Activated CD4-positive, alpha-beta memory T cell treated with anti-CD3 and anti-CD28 coated beads, Interleukin-2, amount 10 ng/mL, durations not matched to agents 7 days and 5 days (primary cell): ENCODE measurements at regions of chr12 and their contacts with region 1.

Region 1: DNA sequence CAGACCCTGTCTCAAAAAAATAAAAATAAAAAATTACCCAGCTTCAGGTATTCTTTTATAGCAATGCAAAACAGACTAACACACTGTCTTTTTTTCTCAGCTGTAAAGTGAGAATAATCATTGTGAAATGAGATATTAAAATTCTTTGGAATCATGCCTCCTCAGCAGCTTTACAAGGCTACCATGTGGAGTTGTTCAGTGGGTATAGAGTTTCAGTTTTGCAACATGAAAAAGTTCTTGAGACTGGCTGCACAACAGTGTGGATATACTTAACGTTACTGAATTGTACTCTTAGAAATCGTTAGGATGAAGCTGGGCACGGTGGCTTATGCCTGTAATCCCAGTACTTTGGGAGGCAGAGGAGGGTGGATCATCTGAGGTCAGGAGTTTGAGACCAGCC is 15.7 kb upstream of the MAPKAPK5 start:
- DNase-seq: no peak
- H3K4me3 Mint-ChIP-seq: no peak overlapping the region
- H3K27ac Mint-ChIP-seq: no peak overlapping the region
- H3K4me1 Mint-ChIP-seq: no peaks in the 10 kb centered on the region
- H3K27me3 Mint-ChIP-seq: peaks cover 33% of the 10 kb centered on the region

Region 2: GRCh38 chr12:111841750-111842555 is 15.6 kb after region 1 on chr12 and contains the start of gene MAPKAPK5:
- CTCF ChIA-PET with region 1: interaction called, 3 read pairs
- POLR2A ChIA-PET with region 1: interaction called, 11 read pairs
- DNase-seq: peak; percentile 96
- H3K4me3 Mint-ChIP-seq: peak within 1 kb of the TSS; percentile 98
- H3K27ac Mint-ChIP-seq: peak within 1 kb of the TSS; percentile 92
- H3K4me1 Mint-ChIP-seq: peaks cover 51% of the 10 kb centered on the region
- H3K27me3 Mint-ChIP-seq: no peaks in the 10 kb centered on the region
- total RNA-seq, gene MAPKAPK5: 40.4 to 44.8 TPM

Region 3: GRCh38 chr12:112252184-112252583 is 425.9 kb after region 1 on chr12:
- CTCF ChIA-PET with region 1: no interaction called
- POLR2A ChIA-PET with region 1: no interaction called
- DNase-seq: no peak
- H3K4me3 Mint-ChIP-seq: no peak overlapping the region
- H3K27ac Mint-ChIP-seq: no peak overlapping the region
- H3K4me1 Mint-ChIP-seq: no peaks in the 10 kb centered on the region
- H3K27me3 Mint-ChIP-seq: no peaks in the 10 kb centered on the region